GM12878 (cell line): ENCODE measurements at regions of chrX and their contacts with region 1.

Region 1: GRCh38 chrX:71514367-71515038 is 18.4 kb upstream of the OGT start:
- DNase-seq: peak; percentile 58
- ATAC-seq: peak; percentile 95
- H3K4me3 ChIP-seq: no peak overlapping the region
- H3K27ac ChIP-seq: peak overlapping the region; percentile 20
- H3K4me1 ChIP-seq: peaks cover 6% of the 10 kb centered on the region; the same call in 1 of the 2 replicates
- H3K27me3 ChIP-seq: no peaks in the 10 kb centered on the region
- CTCF ChIP-seq: peak; percentile 8 to 37 (median 25); a peak in 3 of 6 replicates
- EP300 ChIP-seq: 0 out of 4 replicates have a peak, but pooled peaks of 1 of the 2 experiments have one; percentile 24
- POLR2A ChIP-seq: no peak
- RAD21 ChIP-seq: peak; percentile 42; the same call in 1 of the 2 replicates

Region 2: DNA sequence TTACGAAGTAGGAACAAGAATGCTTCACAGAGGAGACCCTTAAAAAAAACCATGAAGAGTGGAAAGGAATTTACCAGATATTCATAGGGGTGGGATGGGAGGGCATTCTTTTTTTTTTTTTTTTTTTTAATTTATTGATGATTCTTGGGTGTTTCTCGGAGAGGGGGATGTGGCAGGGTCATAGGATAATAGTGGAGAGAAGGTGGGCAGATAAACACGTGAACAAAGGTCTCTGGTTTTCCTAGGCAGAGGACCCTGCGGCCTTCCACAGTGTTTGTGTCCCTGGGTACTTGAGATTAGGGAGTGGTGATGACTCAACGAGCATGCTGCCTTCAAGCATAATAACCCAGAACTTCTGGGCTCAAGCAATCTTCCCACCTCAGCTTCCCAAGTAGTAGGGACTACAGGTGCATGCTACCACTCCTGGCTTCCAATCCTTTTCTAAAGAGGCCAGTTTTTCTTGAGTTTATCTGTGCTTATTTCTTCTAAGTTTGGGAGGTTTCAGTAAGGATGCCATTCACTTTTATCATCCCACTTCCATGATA is 47.5 kb before region 1 on chrX:
- CTCF ChIA-PET with region 1: interaction called, 3 read pairs
- POLR2A ChIA-PET with region 1: no interaction called
- RAD21 ChIA-PET with region 1: no interaction called
- SMC1A ChIA-PET with region 1: no interaction called
- in situ Hi-C with region 1: loop called (anchors 5 kb)
- intact Hi-C with region 1: no loop called
- DNase-seq: no peak
- ATAC-seq: no peak
- H3K4me3 ChIP-seq: no peak overlapping the region
- H3K27ac ChIP-seq: no peak overlapping the region
- H3K4me1 ChIP-seq: no peaks in the 10 kb centered on the region
- H3K27me3 ChIP-seq: no peaks in the 10 kb centered on the region
- CTCF ChIP-seq: no peak
- EP300 ChIP-seq: no peak
- POLR2A ChIP-seq: no peak
- RAD21 ChIP-seq: no peak

Region 3: DNA sequence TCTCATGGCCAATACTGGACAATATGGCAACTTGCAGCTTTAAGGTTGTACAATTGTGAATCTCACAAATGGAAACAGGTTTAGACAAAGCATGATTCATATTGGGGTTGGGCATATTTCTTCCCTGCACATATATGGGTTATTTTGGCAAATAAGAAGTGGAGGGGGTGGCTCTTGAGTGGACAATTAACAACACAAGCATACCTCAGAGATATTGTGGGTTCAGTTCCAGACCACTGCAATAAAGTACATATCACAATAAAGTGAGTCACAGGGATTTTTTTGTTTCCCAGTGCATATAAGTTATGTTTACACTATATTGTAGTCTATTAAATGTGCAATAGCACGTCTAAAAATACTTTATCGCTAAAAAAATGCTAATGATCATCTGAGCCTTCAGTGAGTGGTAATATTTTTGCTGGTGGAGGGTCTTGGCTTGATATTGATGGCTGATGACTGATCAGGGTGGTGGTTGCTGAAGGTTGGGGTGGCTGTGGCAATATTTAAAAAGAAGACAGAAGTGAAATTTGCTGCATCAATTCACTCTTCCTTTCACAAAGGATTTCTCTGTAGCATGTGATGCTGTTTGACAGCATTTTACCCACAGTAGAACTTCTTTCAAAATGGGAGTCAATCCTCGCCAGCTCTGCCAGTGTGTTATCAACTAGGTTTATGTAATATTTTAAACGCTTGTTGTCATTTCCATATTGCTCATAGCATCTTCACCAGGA is 32.1 kb before region 1 on chrX:
- CTCF ChIA-PET with region 1: no interaction called
- POLR2A ChIA-PET with region 1: no interaction called
- RAD21 ChIA-PET with region 1: no interaction called
- SMC1A ChIA-PET with region 1: no interaction called
- in situ Hi-C with region 1: no loop called
- intact Hi-C with region 1: no loop called
- DNase-seq: no peak
- ATAC-seq: peak; percentile 40
- H3K4me3 ChIP-seq: no peak overlapping the region
- H3K27ac ChIP-seq: no peak overlapping the region
- H3K4me1 ChIP-seq: no peaks in the 10 kb centered on the region
- H3K27me3 ChIP-seq: no peaks in the 10 kb centered on the region
- CTCF ChIP-seq: no peak
- EP300 ChIP-seq: no peak
- POLR2A ChIP-seq: no peak
- RAD21 ChIP-seq: no peak

Region 4: GRCh38 chrX:71492231-71493065 is 22.1 kb before region 1 on chrX:
- CTCF ChIA-PET with region 1: no interaction called
- POLR2A ChIA-PET with region 1: no interaction called
- RAD21 ChIA-PET with region 1: no interaction called
- SMC1A ChIA-PET with region 1: no interaction called
- in situ Hi-C with region 1: no loop called
- intact Hi-C with region 1: no loop called
- DNase-seq: no peak
- ATAC-seq: peak; percentile 83
- H3K4me3 ChIP-seq: peak overlapping the region; percentile 60
- H3K27ac ChIP-seq: no peak overlapping the region
- H3K4me1 ChIP-seq: no peaks in the 10 kb centered on the region; the same call in 1 of the 2 replicates
- H3K27me3 ChIP-seq: no peaks in the 10 kb centered on the region
- CTCF ChIP-seq: 0 out of 6 replicates have a peak, but pooled peaks of 1 of the 3 experiments have one; percentile 2
- EP300 ChIP-seq: no peak
- POLR2A ChIP-seq: no peak
- RAD21 ChIP-seq: no peak

Region 5: DNA sequence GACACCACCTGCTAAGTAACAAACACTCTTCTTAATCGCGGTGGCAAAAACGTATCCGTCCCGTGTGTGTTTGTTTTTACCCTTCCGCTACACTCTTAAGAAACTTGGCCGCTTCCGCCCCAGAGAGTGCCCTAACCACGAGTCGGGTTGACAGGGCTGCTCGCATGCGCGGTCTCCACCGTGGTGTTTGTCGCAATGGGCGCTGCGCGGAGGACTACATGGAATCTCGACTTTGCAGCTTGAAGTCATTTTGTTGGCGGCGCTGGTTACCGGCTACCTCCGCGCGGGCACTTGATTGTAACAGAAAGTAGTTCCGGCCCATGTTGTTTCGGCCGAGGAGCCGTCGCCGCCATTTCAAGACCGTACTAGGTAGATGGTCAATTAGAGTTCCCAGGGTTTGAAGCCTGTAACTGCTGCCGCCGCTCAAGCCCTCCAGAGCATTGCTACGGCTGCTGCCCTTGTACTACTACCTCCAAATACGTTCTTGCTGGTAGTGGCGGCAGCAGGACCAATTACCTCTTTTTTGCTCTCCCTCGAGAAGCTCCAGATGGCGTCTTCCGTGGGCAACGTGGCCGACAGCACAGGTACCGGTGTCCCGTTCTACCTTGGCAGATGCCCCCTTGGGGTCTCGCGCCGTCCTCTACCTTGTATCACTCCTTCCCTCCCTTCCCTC is 18.4 kb after region 1 on chrX and contains the start of gene OGT:
- CTCF ChIA-PET with region 1: interaction called, 6 read pairs
- POLR2A ChIA-PET with region 1: interaction called, 10 read pairs
- RAD21 ChIA-PET with region 1: interaction called, 9 read pairs
- SMC1A ChIA-PET with region 1: interaction called, 51 read pairs
- in situ Hi-C with region 1: no loop called
- intact Hi-C with region 1: loop called (anchors 1 kb)
- DNase-seq: peak; percentile 79
- ATAC-seq: peak; percentile 86
- H3K4me3 ChIP-seq: peak within 1 kb of the TSS; percentile 71
- H3K27ac ChIP-seq: peak within 1 kb of the TSS; percentile 83
- H3K4me1 ChIP-seq: 0 out of 2 replicates have a peak, but pooled peaks cover 3% of the 10 kb centered on the region
- H3K27me3 ChIP-seq: no peaks in the 10 kb centered on the region
- CTCF ChIP-seq: no peak
- EP300 ChIP-seq: peak in 1 of 2 experiments; percentile 49; a peak in 1 of 4 replicates
- POLR2A ChIP-seq: peak; percentile 82
- RAD21 ChIP-seq: no peak
- polyA plus RNA-seq, gene OGT: 38.2 to 43.8 TPM

Region 6: GRCh38 chrX:72100824-72101351 is 586.4 kb after region 1 on chrX:
- CTCF ChIA-PET with region 1: no interaction called
- POLR2A ChIA-PET with region 1: no interaction called
- RAD21 ChIA-PET with region 1: no interaction called
- SMC1A ChIA-PET with region 1: no interaction called
- in situ Hi-C with region 1: no loop called
- intact Hi-C with region 1: loop called (anchors 10 kb)
- DNase-seq: peak; percentile 70
- ATAC-seq: peak; percentile 93
- H3K4me3 ChIP-seq: no peak overlapping the region
- H3K27ac ChIP-seq: no peak overlapping the region
- H3K4me1 ChIP-seq: peaks cover 25% of the 10 kb centered on the region
- H3K27me3 ChIP-seq: no peaks in the 10 kb centered on the region
- CTCF ChIP-seq: no peak
- EP300 ChIP-seq: peak; percentile 49 to 55; a peak in 2 of 4 replicates
- POLR2A ChIP-seq: no peak
- RAD21 ChIP-seq: no peak